ENCODE measurements at regions of chr2 and their contacts with region 1.

Region 1: DNA sequence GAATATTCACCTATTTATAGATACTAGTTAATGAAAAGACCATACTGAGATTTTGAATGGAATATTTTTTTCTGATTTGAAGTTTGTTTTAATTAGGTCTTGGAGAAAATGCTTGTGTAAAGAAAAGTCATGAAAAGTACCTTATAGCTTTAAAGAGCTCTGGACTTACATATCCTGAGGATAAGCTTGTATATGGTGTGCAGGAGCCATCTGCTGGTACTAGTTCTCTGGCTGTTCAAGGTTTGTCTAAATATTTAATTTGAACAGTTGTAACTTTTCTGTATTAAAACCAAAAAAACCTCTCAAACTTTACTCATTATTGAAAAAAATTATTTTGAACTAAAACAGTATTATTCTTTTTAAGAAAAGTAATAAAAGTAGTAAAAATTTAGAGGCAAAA is 50.1 kb downstream of the UBR3 start:
- DNase-seq: no peak
- H3K4me3 ChIP-seq: no peak overlapping the region
- H3K27ac ChIP-seq: no peak overlapping the region
- H3K4me1 ChIP-seq: no peaks in the 10 kb centered on the region
- H3K27me3 ChIP-seq: no peaks in the 10 kb centered on the region
- CTCF ChIP-seq: no peak
- EP300 ChIP-seq: no peak
- POLR2A ChIP-seq: no peak

Region 2: GRCh38 chr2:169824373-169825333 is 52.7 kb before region 1 on chr2 and contains the start of gene METTL5:
- intact Hi-C with region 1: loop called (anchors 5 kb)
- DNase-seq: peak; percentile 88
- H3K4me3 ChIP-seq: peak within 1 kb of the TSS; percentile 83 to 89 (median 86)
- H3K27ac ChIP-seq: peak within 1 kb of the TSS; percentile 85 to 89 (median 86)
- H3K4me1 ChIP-seq: peaks cover 0 to 48% (median 29%) of the 10 kb centered on the region in 4 donors
- H3K27me3 ChIP-seq: no peaks in the 10 kb centered on the region
- CTCF ChIP-seq: peak; percentile 56 to 96 (median 79)
- EP300 ChIP-seq: no peak
- POLR2A ChIP-seq: peak in 1 of 2 donors; percentile 48
- total RNA-seq, gene METTL5: 51.5 to 337 (median 86.9) TPM

Region 3: GRCh38 chr2:170148161-170148560 is 270.8 kb after region 1 on chr2:
- intact Hi-C with region 1: no loop called
- DNase-seq: no peak
- H3K4me3 ChIP-seq: no peak overlapping the region
- H3K27ac ChIP-seq: no peak overlapping the region
- H3K4me1 ChIP-seq: peaks cover 0 to 4% (median 0%) of the 10 kb centered on the region in 4 donors
- H3K27me3 ChIP-seq: no peaks in the 10 kb centered on the region
- CTCF ChIP-seq: no peak
- EP300 ChIP-seq: no peak
- POLR2A ChIP-seq: no peak